Heart left ventricle (tissue), 16 donors: ENCODE measurements at regions of chr6 and their contacts with region 1.

Region 1: DNA sequence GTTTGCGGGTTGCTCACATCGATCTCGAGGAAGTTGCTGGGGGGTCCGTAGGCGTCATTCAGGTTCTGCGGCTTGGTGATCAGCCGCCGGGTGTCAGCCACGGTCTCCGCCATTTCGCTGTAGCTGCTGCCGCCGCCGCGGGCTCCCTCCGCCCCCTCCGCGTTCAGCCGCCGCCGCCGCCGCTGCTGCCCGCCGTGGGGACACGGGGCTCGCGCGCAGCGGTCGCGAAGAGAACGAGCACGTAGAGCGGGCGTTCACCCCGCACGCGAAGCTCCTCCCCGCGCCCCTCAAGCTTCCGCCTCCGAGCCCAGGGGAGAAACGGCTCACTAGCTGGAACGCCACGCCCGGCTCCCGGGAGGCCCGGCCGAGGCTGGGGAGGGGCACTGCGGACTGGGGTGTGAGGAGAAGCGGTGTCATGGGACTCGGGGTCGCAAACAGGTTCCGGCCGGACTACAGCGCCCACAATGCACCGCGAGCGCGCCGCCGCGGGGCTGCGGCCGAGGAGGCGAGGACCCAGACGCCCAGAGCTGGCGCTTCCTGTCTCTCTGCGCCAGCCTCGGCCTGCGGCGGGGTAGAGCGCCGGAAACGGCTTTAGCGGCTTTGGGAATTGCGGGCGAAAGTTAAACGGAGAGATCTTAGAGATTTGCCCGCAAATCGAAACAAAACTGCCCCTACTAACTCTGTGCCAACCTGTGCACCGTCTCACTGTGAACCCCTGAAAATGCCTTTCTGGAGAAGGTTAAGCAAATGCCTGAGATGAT is at the start of gene SNX3:
- DNase-seq: peak; percentile 94 to 98 (median 97)
- ATAC-seq: peak; percentile 97 to 98 (median 98)
- H3K4me3 ChIP-seq: peak within 1 kb of the TSS; percentile 65 to 100 (median 89)
- H3K27ac ChIP-seq: peak within 1 kb of the TSS; percentile 90 to 100 (median 97)
- H3K4me1 ChIP-seq: peaks cover 0 to 46% (median 31%) of the 10 kb centered on the region in 12 donors
- H3K27me3 ChIP-seq: no peaks in the 10 kb centered on the region
- CTCF ChIP-seq: peak in 3 of 12 donors; percentile 5 to 37 (median 11)
- POLR2A ChIP-seq: peak in 1 of 2 donors; percentile 80
- total RNA-seq, gene SNX3: 180 to 259 (median 241) TPM

Region 2: DNA sequence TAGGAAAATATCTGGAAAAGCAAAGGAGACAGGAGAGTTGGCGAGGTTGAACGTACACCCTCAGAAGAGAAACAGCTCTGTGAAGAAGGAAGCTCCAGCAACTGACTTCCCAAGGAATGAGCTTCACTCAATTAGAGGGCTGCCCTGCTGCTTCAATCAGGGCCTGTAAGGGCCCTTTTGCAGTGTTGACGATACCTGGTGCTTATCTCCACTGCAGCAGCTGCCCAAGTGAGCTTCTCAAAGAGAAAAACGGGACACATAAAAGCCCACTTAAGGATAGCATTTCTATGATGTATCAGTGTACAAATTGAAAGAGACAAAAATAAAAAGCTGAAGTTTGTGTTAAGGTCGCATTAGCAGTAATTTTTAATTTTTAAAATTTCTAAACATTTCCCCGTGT is 319.4 kb before region 1 on chr6:
- intact Hi-C with region 1: no loop called
- DNase-seq: no peak
- ATAC-seq: peak in 1 of 4 donors; percentile 46
- H3K4me3 ChIP-seq: no peak overlapping the region
- H3K27ac ChIP-seq: no peak overlapping the region
- H3K4me1 ChIP-seq: peaks cover 0 to 34% (median 11%) of the 10 kb centered on the region in 12 donors
- H3K27me3 ChIP-seq: no peaks in the 10 kb centered on the region
- CTCF ChIP-seq: no peak
- POLR2A ChIP-seq: no peak

Region 3: GRCh38 chr6:107957909-107958688 is 302.9 kb before region 1 on chr6 and contains the start of gene SEC63:
- intact Hi-C with region 1: loop called in 1 of 10 experiments (anchors 5 kb)
- DNase-seq: peak; percentile 98 to 99 (median 98)
- ATAC-seq: peak; percentile 99 to 100 (median 99)
- H3K4me3 ChIP-seq: peak within 1 kb of the TSS; percentile 69 to 99 (median 84)
- H3K27ac ChIP-seq: peak within 1 kb of the TSS; percentile 30 to 95 (median 90)
- H3K4me1 ChIP-seq: peaks cover 0 to 31% (median 23%) of the 10 kb centered on the region in 12 donors
- H3K27me3 ChIP-seq: no peaks in the 10 kb centered on the region
- CTCF ChIP-seq: no peak
- POLR2A ChIP-seq: peak; percentile 69 to 85
- total RNA-seq, gene SEC63: 15.3 to 64.9 (median 56.0) TPM

Region 4: DNA sequence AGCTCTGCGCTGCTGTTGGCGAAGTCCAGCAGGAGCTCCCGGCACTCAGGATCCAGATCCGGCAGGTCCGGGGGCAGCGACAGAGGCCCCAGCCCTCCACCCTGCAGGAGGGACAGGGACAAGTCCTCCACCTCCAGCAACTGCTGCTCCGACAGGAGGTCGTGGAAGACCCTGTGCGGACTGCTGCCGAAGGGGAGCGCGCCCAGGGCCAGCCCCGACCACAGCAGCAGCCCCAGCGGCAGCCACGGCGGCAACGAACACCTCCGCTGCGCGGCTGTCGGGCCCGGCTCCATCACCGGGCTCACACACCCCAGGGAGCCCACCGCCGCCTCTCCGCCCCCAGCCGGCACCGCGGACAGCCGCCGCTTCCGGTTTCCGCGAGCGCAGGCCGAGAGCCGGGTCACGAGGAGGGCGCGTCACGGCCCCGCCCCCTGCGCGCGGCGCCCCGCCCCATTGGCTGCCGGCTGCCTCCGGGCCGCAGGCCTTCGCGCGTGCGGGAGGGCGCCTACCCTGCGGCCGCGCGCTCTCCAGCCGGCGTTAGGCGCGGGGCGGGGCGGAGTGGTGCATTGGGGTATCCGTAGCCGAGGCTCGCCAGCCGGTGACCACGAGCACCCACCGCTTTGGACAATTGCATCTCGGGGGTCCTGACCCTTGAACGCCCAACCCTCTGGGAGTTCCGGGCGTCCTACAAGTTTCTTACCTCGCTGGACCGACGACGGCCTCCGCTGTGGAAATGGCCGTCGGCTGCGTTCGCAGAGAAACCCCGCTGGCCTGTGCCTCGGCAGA is 186.4 kb before region 1 on chr6 and contains the start of gene OSTM1:
- intact Hi-C with region 1: loop called in 1 of 10 experiments (anchors 2 kb)
- DNase-seq: peak; percentile 91 to 97 (median 93)
- ATAC-seq: peak; percentile 96 to 100 (median 99)
- H3K4me3 ChIP-seq: peak within 1 kb of the TSS; percentile 56 to 100 (median 96)
- H3K27ac ChIP-seq: peak within 1 kb of the TSS in 11 of 12 donors; percentile 70 to 91 (median 84)
- H3K4me1 ChIP-seq: peaks cover 0 to 18% (median 14%) of the 10 kb centered on the region in 12 donors
- H3K27me3 ChIP-seq: no peaks in the 10 kb centered on the region
- CTCF ChIP-seq: no peak
- POLR2A ChIP-seq: peak in 1 of 2 donors; percentile 89
- total RNA-seq, gene OSTM1: 29.3 to 69.3 (median 45.3) TPM

Region 5: GRCh38 chr6:108168501-108169463 is 92.2 kb before region 1 on chr6:
- intact Hi-C with region 1: no loop called
- DNase-seq: peak in 3 of 5 donors; percentile 42 to 64 (median 43)
- ATAC-seq: peak in 3 of 4 donors; percentile 71 to 81 (median 71)
- H3K4me3 ChIP-seq: peak overlapping the region; percentile 4 to 40 (median 27)
- H3K27ac ChIP-seq: no peak overlapping the region
- H3K4me1 ChIP-seq: peaks cover 2 to 63% (median 47%) of the 10 kb centered on the region in 12 donors
- H3K27me3 ChIP-seq: peaks cover 67 to 100% (median 99%) of the 10 kb centered on the region in 9 donors
- CTCF ChIP-seq: peak in 6 of 12 donors; percentile 11 to 47 (median 34)
- POLR2A ChIP-seq: no peak

Region 6: GRCh38 chr6:108294727-108295625 is 34.0 kb after region 1 on chr6 and contains the start of gene AFG1L:
- intact Hi-C with region 1: loop called in 7 of 10 experiments (anchors 1 to 5 kb)
- DNase-seq: peak; percentile 95 to 97 (median 96)
- ATAC-seq: peak; percentile 98 to 100 (median 100)
- H3K4me3 ChIP-seq: peak within 1 kb of the TSS; percentile 67 to 92 (median 83)
- H3K27ac ChIP-seq: peak within 1 kb of the TSS; percentile 89 to 98 (median 95)
- H3K4me1 ChIP-seq: peaks cover 0 to 27% (median 7%) of the 10 kb centered on the region in 12 donors
- H3K27me3 ChIP-seq: no peaks in the 10 kb centered on the region
- CTCF ChIP-seq: no peak
- POLR2A ChIP-seq: peak; percentile 2 to 61
- total RNA-seq, gene AFG1L: 1.9 to 16.6 (median 11.1) TPM

Region 7: GRCh38 chr6:109713097-109713496 is 1452.1 kb after region 1 on chr6:
- intact Hi-C with region 1: no loop called
- DNase-seq: no peak
- ATAC-seq: no peak
- H3K4me3 ChIP-seq: no peak overlapping the region
- H3K27ac ChIP-seq: no peak overlapping the region
- H3K4me1 ChIP-seq: no peaks in the 10 kb centered on the region
- H3K27me3 ChIP-seq: no peaks in the 10 kb centered on the region
- CTCF ChIP-seq: no peak
- POLR2A ChIP-seq: no peak